ENCODE measurements at regions of chr2 and their contacts with region 1.

Region 1: DNA sequence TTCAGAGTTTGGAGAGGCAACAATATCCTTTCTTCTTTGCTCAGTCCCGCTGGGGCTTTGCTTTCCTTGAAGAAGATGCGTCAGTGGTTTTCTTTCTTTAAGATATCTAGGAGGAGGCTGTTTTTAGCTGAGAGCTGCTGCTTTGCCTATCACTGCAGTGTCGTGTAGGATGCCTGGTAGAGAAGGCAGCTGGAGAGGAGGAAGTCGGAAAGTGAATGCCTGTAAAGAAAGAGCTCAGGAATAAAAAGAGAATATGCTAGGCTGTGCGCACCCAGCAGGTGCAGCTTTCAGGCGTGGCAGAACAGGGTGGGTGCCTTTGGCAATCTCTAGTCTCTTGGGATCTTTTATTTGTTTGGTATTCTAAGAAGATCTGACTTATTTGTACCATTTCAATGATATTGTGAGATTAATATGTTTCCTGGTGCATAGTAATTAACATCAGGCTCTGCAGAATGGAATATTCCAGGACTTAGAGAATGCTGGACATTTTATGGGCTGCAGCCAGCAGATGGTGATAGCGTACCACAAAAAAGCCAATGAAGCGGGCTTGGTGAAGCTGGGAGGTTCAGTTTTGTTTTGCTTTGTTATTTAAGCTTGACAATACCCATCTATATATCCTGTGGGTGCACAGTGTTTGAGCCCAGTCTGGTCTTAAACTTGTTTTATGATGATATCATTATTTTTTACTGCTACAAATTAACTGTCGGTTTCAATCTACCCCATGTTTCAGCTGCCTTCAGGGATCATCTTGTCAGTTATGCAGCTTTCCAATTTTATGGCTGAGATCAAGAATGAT is 34.9 kb downstream of the CAVIN2 start:
- DNase-seq: no peak
- ATAC-seq: no peak
- H3K4me3 Mint-ChIP-seq: no peak overlapping the region
- H3K27ac Mint-ChIP-seq: no peak overlapping the region
- H3K4me1 Mint-ChIP-seq: no peaks in the 10 kb centered on the region
- H3K27me3 Mint-ChIP-seq: peaks cover 2% of the 10 kb centered on the region
- CTCF ChIP-seq: no peak

Region 2: GRCh38 chr2:191389288-191389687 is 422.7 kb before region 1 on chr2:
- CTCF ChIA-PET with region 1: no interaction called
- POLR2A ChIA-PET with region 1: no interaction called
- intact Hi-C with region 1: no loop called
- DNase-seq: no peak
- ATAC-seq: no peak
- H3K4me3 Mint-ChIP-seq: no peak overlapping the region
- H3K27ac Mint-ChIP-seq: no peak overlapping the region
- H3K4me1 Mint-ChIP-seq: peaks cover 3% of the 10 kb centered on the region
- H3K27me3 Mint-ChIP-seq: no peaks in the 10 kb centered on the region
- CTCF ChIP-seq: no peak

Region 3: GRCh38 chr2:193584522-193584938 is 1772.5 kb after region 1 on chr2:
- CTCF ChIA-PET with region 1: no interaction called
- POLR2A ChIA-PET with region 1: no interaction called
- intact Hi-C with region 1: loop called (anchors 10 kb)
- DNase-seq: no peak
- ATAC-seq: peak; percentile 70
- H3K4me3 Mint-ChIP-seq: no peak overlapping the region
- H3K27ac Mint-ChIP-seq: no peak overlapping the region
- H3K4me1 Mint-ChIP-seq: no peaks in the 10 kb centered on the region
- H3K27me3 Mint-ChIP-seq: no peaks in the 10 kb centered on the region
- CTCF ChIP-seq: no peak